ENCODE measurements at regions of chr18 and their contacts with region 1.

Region 1: GRCh38 chr18:5057386-5058348 is 139.4 kb downstream of the AKAIN1 start:
- DNase-seq: peak; percentile 71
- H3K4me3 Mint-ChIP-seq: no peak overlapping the region
- H3K27ac Mint-ChIP-seq: no peak overlapping the region
- H3K4me1 Mint-ChIP-seq: peaks cover 20% of the 10 kb centered on the region
- H3K27me3 Mint-ChIP-seq: peaks cover 5% of the 10 kb centered on the region

Region 2: GRCh38 chr18:4106407-4107033 is 951.1 kb before region 1 on chr18:
- CTCF ChIA-PET with region 1: interaction called, 43 read pairs
- intact Hi-C with region 1: loop called (anchors 1 kb)
- DNase-seq: peak; percentile 81
- H3K4me3 Mint-ChIP-seq: no peak overlapping the region
- H3K27ac Mint-ChIP-seq: no peak overlapping the region
- H3K4me1 Mint-ChIP-seq: no peaks in the 10 kb centered on the region
- H3K27me3 Mint-ChIP-seq: peaks cover 4% of the 10 kb centered on the region

Region 3: GRCh38 chr18:4119813-4120212 is 937.9 kb before region 1 on chr18:
- CTCF ChIA-PET with region 1: no interaction called
- intact Hi-C with region 1: loop called (anchors 5 kb)
- DNase-seq: no peak
- H3K4me3 Mint-ChIP-seq: no peak overlapping the region
- H3K27ac Mint-ChIP-seq: no peak overlapping the region
- H3K4me1 Mint-ChIP-seq: no peaks in the 10 kb centered on the region
- H3K27me3 Mint-ChIP-seq: peaks cover 13% of the 10 kb centered on the region

Region 4: GRCh38 chr18:4653418-4653817 is 404.2 kb before region 1 on chr18:
- CTCF ChIA-PET with region 1: no interaction called
- intact Hi-C with region 1: no loop called
- DNase-seq: no peak
- H3K4me3 Mint-ChIP-seq: no peak overlapping the region
- H3K27ac Mint-ChIP-seq: no peak overlapping the region
- H3K4me1 Mint-ChIP-seq: no peaks in the 10 kb centered on the region
- H3K27me3 Mint-ChIP-seq: no peaks in the 10 kb centered on the region